Dorsolateral prefrontal cortex (tissue), 120 donors: ENCODE measurements at regions of chr1 and their contacts with region 1.

Region 1: GRCh38 chr1:18597160-18598042 is 33.2 kb upstream of the PAX7 start:
- DNase-seq: peak; percentile 54 to 81 (median 64)
- H3K4me3 ChIP-seq: no peak overlapping the region
- H3K27ac ChIP-seq: no peak overlapping the region
- H3K27me3 ChIP-seq: peaks cover 0 to 30% (median 9%) of the 10 kb centered on the region in 45 donors
- CTCF ChIP-seq: peak; percentile 70 to 98 (median 91)

Region 2: DNA sequence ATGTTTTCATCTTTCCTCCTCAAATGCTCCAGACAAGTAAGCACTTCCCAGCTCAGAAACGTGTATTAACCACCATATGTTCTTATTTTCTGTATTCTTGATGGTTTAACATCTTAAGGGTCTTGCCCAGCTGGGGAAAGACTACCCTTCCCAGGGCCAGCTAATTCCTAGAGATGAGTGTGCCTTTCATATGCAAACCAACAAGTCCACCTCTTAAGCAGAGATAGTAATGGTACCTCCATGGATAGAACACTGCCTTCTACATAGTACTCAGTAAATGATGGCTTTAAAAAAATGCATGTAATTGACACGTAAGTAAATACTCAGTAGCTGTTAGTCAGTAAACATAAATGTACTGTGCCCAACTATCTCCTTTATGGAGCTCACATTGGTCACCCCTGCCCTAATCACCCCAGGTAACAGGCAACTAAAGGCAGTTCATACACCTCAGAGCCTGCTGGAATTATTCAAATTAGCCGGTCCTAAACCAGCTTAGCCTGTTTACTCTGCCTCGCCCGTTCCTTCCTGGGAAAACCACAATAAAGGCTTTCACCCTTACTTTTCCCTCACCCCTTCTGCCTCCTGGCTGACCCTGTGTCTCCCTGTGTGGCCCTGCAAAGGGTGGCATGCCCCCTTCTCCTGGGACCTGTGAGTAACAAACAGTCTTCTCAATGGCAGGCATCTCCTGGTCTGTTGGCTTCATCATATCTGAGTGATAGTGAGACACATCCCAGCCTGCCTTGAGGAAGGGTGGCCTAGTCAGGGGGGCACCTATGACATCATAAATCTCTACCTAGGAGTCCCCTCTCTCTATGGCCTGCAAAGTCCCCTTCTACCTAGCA is 156.8 kb before region 1 on chr1:
- intact Hi-C with region 1: no loop called
- DNase-seq: no peak
- H3K4me3 ChIP-seq: no peak overlapping the region
- H3K27ac ChIP-seq: no peak overlapping the region
- H3K27me3 ChIP-seq: peaks cover 0 to 21% (median 0%) of the 10 kb centered on the region in 45 donors
- CTCF ChIP-seq: no peak

Region 3: GRCh38 chr1:18820791-18821641 is 223.6 kb after region 1 on chr1:
- intact Hi-C with region 1: loop called (anchors 2 kb)
- DNase-seq: peak; percentile 53 to 84 (median 74)
- H3K4me3 ChIP-seq: no peak overlapping the region
- H3K27ac ChIP-seq: no peak overlapping the region
- H3K27me3 ChIP-seq: peaks cover 0 to 39% (median 16%) of the 10 kb centered on the region in 45 donors
- CTCF ChIP-seq: peak; percentile 48 to 97 (median 86)

Region 4: GRCh38 chr1:18875107-18875795 is 277.9 kb after region 1 on chr1:
- intact Hi-C with region 1: loop called (anchors 2 to 5 kb)
- DNase-seq: peak; percentile 75 to 92 (median 86)
- H3K4me3 ChIP-seq: no peak overlapping the region
- H3K27ac ChIP-seq: no peak overlapping the region
- H3K27me3 ChIP-seq: no peaks in the 10 kb centered on the region
- CTCF ChIP-seq: peak; percentile 58 to 91 (median 85)